HepG2 (cell line): ENCODE measurements at regions of chr6 and their contacts with region 1.

Region 1: DNA sequence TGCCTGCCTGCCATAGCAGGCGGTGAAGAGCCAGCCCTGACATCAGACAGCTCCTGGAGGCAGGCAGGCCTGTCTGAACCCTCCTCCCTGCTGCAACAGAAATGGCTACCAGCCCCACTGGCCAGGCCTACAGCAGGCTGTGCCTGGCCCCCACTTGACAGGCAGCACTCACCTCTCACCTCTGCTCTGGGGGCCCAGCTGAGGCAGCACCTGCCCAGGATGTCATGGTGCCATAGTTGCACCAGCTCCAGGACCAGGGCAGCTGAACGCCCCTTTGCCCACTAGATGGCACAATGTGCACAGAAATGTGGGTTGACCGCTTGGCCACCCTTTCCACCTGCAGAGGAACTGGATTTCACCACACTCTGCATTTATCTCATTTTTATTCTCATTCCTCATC is 30.6 kb downstream of the MRPL14 start:
- DNase-seq: peak; percentile 77
- ATAC-seq: peak; percentile 56
- H3K4me3 ChIP-seq: no peak overlapping the region
- H3K27ac ChIP-seq: no peak overlapping the region
- H3K4me1 ChIP-seq: peaks cover 95% of the 10 kb centered on the region
- H3K27me3 ChIP-seq: no peaks in the 10 kb centered on the region
- CTCF ChIP-seq: peak; percentile 99
- EP300 ChIP-seq: no peak
- POLR2A ChIP-seq: 0 out of 4 replicates have a peak, but pooled peaks of 1 of the 2 experiments have one; percentile 35
- RAD21 ChIP-seq: peak; percentile 97

Region 2: DNA sequence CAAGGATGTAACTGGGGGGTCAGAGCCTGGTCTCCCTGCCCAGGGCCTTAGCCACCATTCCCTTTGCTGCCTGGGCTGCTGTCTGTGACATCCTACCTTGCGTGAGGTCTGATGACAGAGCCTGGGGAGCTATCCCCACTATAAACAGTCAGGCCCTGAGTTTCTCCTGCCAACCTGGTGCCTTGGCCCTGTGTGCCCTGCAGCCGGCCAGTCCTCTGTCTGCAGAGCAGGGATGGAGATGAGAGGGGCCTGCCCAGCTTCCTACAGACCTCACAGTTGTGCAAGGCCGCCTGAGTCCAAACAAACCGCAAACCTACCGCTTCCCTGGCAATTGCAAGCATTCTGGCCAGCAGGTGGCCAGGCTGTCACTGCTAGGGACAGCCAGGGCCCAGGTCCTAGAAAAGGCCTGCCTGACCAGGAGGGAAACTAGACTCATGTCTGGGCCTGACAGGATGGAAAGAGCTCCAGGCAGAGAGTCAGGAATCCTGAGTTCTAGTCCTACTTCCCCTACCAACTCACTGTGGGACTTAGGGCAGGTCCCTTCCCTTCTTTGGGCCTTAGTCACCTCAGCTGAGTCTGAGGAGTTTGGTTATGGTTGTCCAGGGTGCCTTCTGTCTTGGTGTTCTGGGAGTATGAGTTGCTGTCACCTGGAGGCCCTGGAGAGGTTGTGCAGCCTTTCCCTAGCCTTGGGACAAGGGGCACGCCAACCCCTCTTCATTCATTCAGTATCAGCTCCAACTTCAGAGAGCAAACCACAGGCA is 240.4 kb before region 1 on chr6:
- CTCF ChIA-PET with region 1: no interaction called
- POLR2A ChIA-PET with region 1: no interaction called
- in situ Hi-C with region 1: no loop called
- intact Hi-C with region 1: no loop called
- DNase-seq: peak; percentile 86
- ATAC-seq: peak; percentile 91
- H3K4me3 ChIP-seq: no peak overlapping the region
- H3K27ac ChIP-seq: no peak overlapping the region
- H3K4me1 ChIP-seq: peaks cover 85% of the 10 kb centered on the region
- H3K27me3 ChIP-seq: peaks cover 3 to 4% of the 10 kb centered on the region in 2 experiments; a peak in 1 of 5 replicates
- CTCF ChIP-seq: peak; percentile 99
- EP300 ChIP-seq: peak in 1 of 2 experiments; percentile 20; a peak in 1 of 4 replicates
- POLR2A ChIP-seq: no peak
- RAD21 ChIP-seq: peak; percentile 96

Region 3: DNA sequence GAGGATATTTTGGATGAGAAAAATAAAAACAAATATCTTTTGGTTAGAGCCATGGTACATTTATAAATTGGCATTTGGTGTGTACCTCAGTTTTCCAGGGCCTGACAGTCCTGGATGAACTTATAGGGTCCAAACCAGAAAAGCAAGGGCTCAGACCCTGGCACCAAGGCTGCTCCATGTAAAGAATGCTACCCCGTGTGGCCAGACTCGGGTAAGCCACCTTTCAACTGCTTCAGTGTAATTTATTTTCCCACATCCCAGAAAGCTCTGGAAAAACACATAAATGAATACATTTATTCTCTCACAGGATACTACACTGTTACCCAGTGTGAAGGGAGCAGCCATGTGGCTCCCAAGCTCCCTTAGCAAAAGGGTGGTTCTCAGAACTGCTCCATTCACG is 16.8 kb after region 1 on chr6:
- CTCF ChIA-PET with region 1: interaction called, 8 read pairs
- POLR2A ChIA-PET with region 1: interaction called, 27 read pairs
- in situ Hi-C with region 1: no loop called
- intact Hi-C with region 1: loop called (anchors 2 kb)
- DNase-seq: no peak
- ATAC-seq: peak; percentile 53
- H3K4me3 ChIP-seq: no peak overlapping the region
- H3K27ac ChIP-seq: peak overlapping the region; percentile 19
- H3K4me1 ChIP-seq: peaks cover 86% of the 10 kb centered on the region
- H3K27me3 ChIP-seq: no peaks in the 10 kb centered on the region
- CTCF ChIP-seq: peak; percentile 32; the same call in 1 of the 2 replicates
- EP300 ChIP-seq: no peak
- POLR2A ChIP-seq: no peak
- RAD21 ChIP-seq: peak; percentile 32; the same call in 1 of the 2 replicates

Region 4: GRCh38 chr6:44142835-44143234 is 46.2 kb after region 1 on chr6:
- CTCF ChIA-PET with region 1: no interaction called
- POLR2A ChIA-PET with region 1: no interaction called
- in situ Hi-C with region 1: no loop called
- intact Hi-C with region 1: loop called (anchors 5 kb)
- DNase-seq: peak; percentile 55
- ATAC-seq: peak; percentile 87
- H3K4me3 ChIP-seq: no peak overlapping the region
- H3K27ac ChIP-seq: peak overlapping the region; percentile 7
- H3K4me1 ChIP-seq: peaks cover 28% of the 10 kb centered on the region
- H3K27me3 ChIP-seq: no peaks in the 10 kb centered on the region
- CTCF ChIP-seq: no peak
- EP300 ChIP-seq: no peak; a peak in 1 of 4 replicates
- POLR2A ChIP-seq: no peak
- RAD21 ChIP-seq: no peak

Region 5: GRCh38 chr6:44156494-44157151 is 60.0 kb after region 1 on chr6:
- CTCF ChIA-PET with region 1: interaction called, 74 read pairs
- POLR2A ChIA-PET with region 1: interaction called, 16 read pairs
- in situ Hi-C with region 1: loop called (anchors 5 kb)
- intact Hi-C with region 1: loop called (anchors 1 kb)
- DNase-seq: peak; percentile 97
- ATAC-seq: peak; percentile 92
- H3K4me3 ChIP-seq: peak overlapping the region; percentile 9 to 53 (median 29)
- H3K27ac ChIP-seq: peak overlapping the region; percentile 85
- H3K4me1 ChIP-seq: peaks cover 71% of the 10 kb centered on the region
- H3K27me3 ChIP-seq: no peaks in the 10 kb centered on the region
- CTCF ChIP-seq: no peak; the same call in 1 of the 2 replicates
- EP300 ChIP-seq: peak; percentile 92 to 96
- POLR2A ChIP-seq: no peak; a peak in 2 of 4 replicates
- RAD21 ChIP-seq: peak; percentile 42; the same call in 1 of the 2 replicates

Region 6: DNA sequence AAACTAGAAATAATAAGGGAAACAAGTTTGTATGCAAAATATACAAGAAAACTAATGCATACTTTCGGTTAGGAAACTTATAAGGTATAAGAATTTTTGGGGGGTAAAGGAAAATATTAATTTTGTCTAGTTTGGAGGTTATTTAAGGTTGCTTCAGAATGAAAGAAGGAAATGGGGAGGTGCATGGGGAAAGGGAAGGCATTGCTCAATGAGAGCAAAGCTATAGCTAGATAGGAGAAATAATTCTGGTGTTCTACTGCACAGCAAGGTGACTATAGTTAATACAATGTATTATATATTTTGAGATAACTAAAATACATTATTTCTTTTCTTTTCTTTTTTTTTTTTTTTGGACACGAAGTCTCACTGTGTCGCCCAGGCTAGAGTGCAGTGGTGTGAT is 114.7 kb after region 1 on chr6:
- CTCF ChIA-PET with region 1: no interaction called
- POLR2A ChIA-PET with region 1: no interaction called
- in situ Hi-C with region 1: no loop called
- intact Hi-C with region 1: no loop called
- DNase-seq: no peak
- ATAC-seq: no peak
- H3K4me3 ChIP-seq: no peak overlapping the region
- H3K27ac ChIP-seq: no peak overlapping the region
- H3K4me1 ChIP-seq: peaks cover 46% of the 10 kb centered on the region
- H3K27me3 ChIP-seq: peaks cover 0 to 15% of the 10 kb centered on the region in 2 experiments; a peak in 3 of 5 replicates
- CTCF ChIP-seq: no peak
- EP300 ChIP-seq: no peak
- POLR2A ChIP-seq: no peak
- RAD21 ChIP-seq: no peak

Region 7: GRCh38 chr6:44257025-44257752 is 160.6 kb after region 1 on chr6 and contains the start of gene SLC35B2:
- CTCF ChIA-PET with region 1: interaction called, 5 read pairs
- POLR2A ChIA-PET with region 1: interaction called, 11 read pairs
- in situ Hi-C with region 1: no loop called
- intact Hi-C with region 1: loop called (anchors 5 kb)
- DNase-seq: peak; percentile 88
- ATAC-seq: peak; percentile 71
- H3K4me3 ChIP-seq: peak within 1 kb of the TSS; percentile 66 to 84 (median 71)
- H3K27ac ChIP-seq: peak within 1 kb of the TSS; percentile 93
- H3K4me1 ChIP-seq: peaks cover 53% of the 10 kb centered on the region
- H3K27me3 ChIP-seq: no peaks in the 10 kb centered on the region; a peak in 1 of 5 replicates
- CTCF ChIP-seq: peak; percentile 73
- EP300 ChIP-seq: peak in 1 of 2 experiments; percentile 10; a peak in 1 of 4 replicates
- POLR2A ChIP-seq: peak in 1 of 2 experiments; percentile 70; a peak in 2 of 4 replicates
- RAD21 ChIP-seq: no peak
- total RNA-seq, gene SLC35B2: 34.9 and 61.1 TPM in 2 replicates

Region 8: DNA sequence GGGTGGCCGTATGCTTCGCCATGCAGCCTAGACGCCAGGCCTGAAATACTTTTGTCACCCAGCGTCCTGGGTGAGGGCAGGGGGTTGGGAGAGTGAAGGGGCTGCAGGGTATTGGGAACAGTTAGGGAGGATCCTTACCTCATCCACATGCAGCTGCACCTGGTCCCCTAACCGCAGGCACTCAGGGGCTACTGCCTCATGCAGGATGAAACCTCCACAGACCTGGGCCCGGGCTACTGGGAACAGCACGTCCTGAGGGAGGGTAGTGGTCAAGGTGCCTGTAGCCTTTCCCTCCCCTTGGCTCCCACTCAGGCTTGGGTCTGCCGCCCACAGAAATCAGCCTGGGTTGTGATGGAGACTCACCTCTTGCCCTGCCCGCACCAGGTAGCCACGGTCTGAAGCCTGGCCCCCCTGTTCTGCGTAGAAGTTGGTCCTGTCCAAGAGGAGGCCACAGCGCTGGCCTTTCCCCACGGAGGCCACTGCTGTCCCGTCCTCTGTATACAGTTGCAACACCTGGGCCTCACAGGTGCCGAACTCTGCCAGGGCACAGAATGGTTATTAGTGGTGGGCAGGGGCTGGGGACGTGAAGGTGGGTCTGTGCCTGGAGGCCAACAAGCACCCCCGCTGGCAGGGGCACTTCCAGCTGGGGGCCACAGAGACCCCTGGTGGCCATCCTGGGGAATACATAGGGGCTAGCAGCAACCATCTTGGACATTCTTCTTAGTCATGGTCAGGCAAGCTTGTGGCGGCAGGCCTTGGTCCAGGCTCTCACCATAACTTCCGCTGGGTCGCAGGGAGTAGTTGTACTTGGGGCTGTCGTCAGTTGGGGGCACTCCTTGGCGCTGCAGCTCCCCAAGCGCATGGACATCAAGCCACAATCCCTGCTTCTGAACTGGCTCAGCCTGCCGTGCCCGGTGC is 207.9 kb after region 1 on chr6:
- CTCF ChIA-PET with region 1: no interaction called
- POLR2A ChIA-PET with region 1: no interaction called
- in situ Hi-C with region 1: no loop called
- intact Hi-C with region 1: no loop called
- DNase-seq: peak; percentile 44
- ATAC-seq: peak; percentile 77
- H3K4me3 ChIP-seq: no peak overlapping the region
- H3K27ac ChIP-seq: no peak overlapping the region
- H3K4me1 ChIP-seq: no peaks in the 10 kb centered on the region
- H3K27me3 ChIP-seq: no peaks in the 10 kb centered on the region
- CTCF ChIP-seq: peak; percentile 93
- EP300 ChIP-seq: no peak
- POLR2A ChIP-seq: no peak
- RAD21 ChIP-seq: peak; percentile 47